CD4-positive, alpha-beta T cell (primary cell): ENCODE measurements at regions of chr13 and their contacts with region 1.

Region 1: DNA sequence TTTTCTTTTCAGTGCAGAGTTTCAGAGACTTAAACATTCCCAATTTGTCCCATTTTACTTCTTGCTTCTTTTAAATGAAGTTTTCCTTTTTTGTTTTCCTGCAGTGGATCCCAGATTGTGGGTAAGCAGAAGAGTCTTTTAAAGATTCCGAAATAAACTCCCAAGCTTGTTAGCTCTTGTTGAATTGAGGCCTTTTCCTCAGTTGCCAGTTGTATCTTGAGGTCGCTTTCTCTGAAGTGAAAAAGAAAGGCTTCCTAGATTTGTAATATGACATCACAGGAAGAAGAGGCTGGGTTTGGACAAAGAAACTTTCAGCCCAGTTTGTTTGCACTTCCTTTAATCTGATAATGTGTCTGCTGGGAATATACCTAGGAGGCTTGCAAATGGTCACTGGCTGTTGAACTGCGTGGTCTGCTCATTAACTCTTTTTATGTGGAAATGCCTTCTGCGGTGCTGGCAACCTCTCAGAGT is at the start of gene LPAR6:
- DNase-seq: peak in 4 of 14 experiments; percentile 23 to 87 (median 72)
- ATAC-seq: peak; percentile 52
- H3K4me3 ChIP-seq: peak within 1 kb of the TSS; percentile 88
- H3K4me3 Mint-ChIP-seq: peak within 1 kb of the TSS; percentile 95
- H3K27ac ChIP-seq: peak within 1 kb of the TSS; percentile 67 to 78
- H3K27ac Mint-ChIP-seq: peak within 1 kb of the TSS; percentile 95
- H3K4me1 ChIP-seq: peaks cover 12% of the 10 kb centered on the region
- H3K4me1 Mint-ChIP-seq: peaks cover 44% of the 10 kb centered on the region
- H3K27me3 ChIP-seq: no peaks in the 10 kb centered on the region
- H3K27me3 Mint-ChIP-seq: no peaks in the 10 kb centered on the region
- CTCF ChIP-seq: no peak
- total RNA-seq, gene LPAR6: 15.5 to 19.4 TPM

Region 2: GRCh38 chr13:48400850-48401291 is 12.0 kb before region 1 on chr13:
- CTCF ChIA-PET with region 1: interaction called, 3 read pairs
- POLR2A ChIA-PET with region 1: interaction called, 7 read pairs
- intact Hi-C with region 1: loop called in 1 of 2 experiments (anchors 1 kb)
- DNase-seq: peak in 3 of 14 experiments; percentile 41 to 60 (median 55)
- ATAC-seq: peak; percentile 68
- H3K4me3 ChIP-seq: peak overlapping the region; percentile 16
- H3K4me3 Mint-ChIP-seq: peak overlapping the region; percentile 13
- H3K27ac ChIP-seq: peak overlapping the region in 1 of 2 donors; percentile 26
- H3K27ac Mint-ChIP-seq: peak overlapping the region; percentile 37
- H3K4me1 ChIP-seq: peaks cover 25% of the 10 kb centered on the region
- H3K4me1 Mint-ChIP-seq: peaks cover 60% of the 10 kb centered on the region
- H3K27me3 ChIP-seq: no peaks in the 10 kb centered on the region
- H3K27me3 Mint-ChIP-seq: no peaks in the 10 kb centered on the region
- CTCF ChIP-seq: peak; percentile 48

Region 3: DNA sequence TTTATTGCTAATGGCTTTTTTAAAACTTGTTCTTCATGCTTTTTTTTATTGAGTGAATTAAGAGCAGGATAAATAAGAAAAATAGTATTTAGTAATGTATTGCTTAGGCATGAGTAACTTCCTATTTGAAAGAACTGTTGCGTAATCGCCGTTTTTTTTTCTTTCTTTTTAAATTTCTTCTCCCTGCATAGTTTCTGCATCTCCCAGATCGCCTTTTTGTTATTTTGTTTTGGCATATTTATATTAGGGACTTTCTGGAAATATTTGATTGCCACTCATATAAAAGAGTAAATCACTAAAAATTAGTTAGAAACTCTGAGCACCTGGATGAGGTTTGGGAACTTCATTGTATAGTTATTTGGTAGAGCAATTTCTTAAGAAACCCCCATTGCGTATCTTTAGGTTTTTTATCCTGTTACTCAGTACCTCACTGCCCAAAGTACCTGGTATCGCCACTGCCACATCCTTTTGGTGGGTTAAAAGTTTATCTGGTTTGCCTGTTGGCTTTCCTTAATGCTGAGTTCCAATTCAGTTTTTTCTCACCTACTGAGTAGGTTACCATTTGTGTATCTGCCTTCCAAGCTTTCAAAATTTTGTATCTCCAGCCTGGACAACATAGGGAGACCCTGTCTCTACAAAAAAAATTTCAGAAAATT is 36.2 kb after region 1 on chr13:
- CTCF ChIA-PET with region 1: no interaction called
- POLR2A ChIA-PET with region 1: interaction called, 7 read pairs
- intact Hi-C with region 1: loop called in 1 of 2 experiments (anchors 5 kb)
- DNase-seq: peak in 2 of 14 experiments; percentile 25 to 35
- ATAC-seq: no peak
- H3K4me3 ChIP-seq: peak overlapping the region; percentile 26
- H3K4me3 Mint-ChIP-seq: peak overlapping the region; percentile 74
- H3K27ac ChIP-seq: no peak overlapping the region
- H3K27ac Mint-ChIP-seq: peak overlapping the region; percentile 24
- H3K4me1 ChIP-seq: peaks cover 8% of the 10 kb centered on the region
- H3K4me1 Mint-ChIP-seq: peaks cover 14% of the 10 kb centered on the region
- H3K27me3 ChIP-seq: no peaks in the 10 kb centered on the region
- H3K27me3 Mint-ChIP-seq: no peaks in the 10 kb centered on the region
- CTCF ChIP-seq: no peak

Region 4: GRCh38 chr13:48492470-48493065 is 79.7 kb after region 1 on chr13:
- CTCF ChIA-PET with region 1: interaction called, 3 read pairs
- POLR2A ChIA-PET with region 1: interaction called, 18 read pairs
- intact Hi-C with region 1: loop called (anchors 5 kb)
- DNase-seq: peak; percentile 46 to 92 (median 62)
- ATAC-seq: peak; percentile 83
- H3K4me3 ChIP-seq: peak overlapping the region; percentile 58
- H3K4me3 Mint-ChIP-seq: no peak overlapping the region
- H3K27ac ChIP-seq: peak overlapping the region; percentile 57 to 79
- H3K27ac Mint-ChIP-seq: no peak overlapping the region
- H3K4me1 ChIP-seq: peaks cover 54% of the 10 kb centered on the region
- H3K4me1 Mint-ChIP-seq: peaks cover 25% of the 10 kb centered on the region
- H3K27me3 ChIP-seq: no peaks in the 10 kb centered on the region
- H3K27me3 Mint-ChIP-seq: no peaks in the 10 kb centered on the region
- CTCF ChIP-seq: no peak

Region 5: GRCh38 chr13:48562296-48563066 is 149.6 kb after region 1 on chr13:
- CTCF ChIA-PET with region 1: no interaction called
- POLR2A ChIA-PET with region 1: interaction called, 10 read pairs
- intact Hi-C with region 1: loop called in 1 of 2 experiments (anchors 5 kb)
- DNase-seq: peak; percentile 25 to 93 (median 52)
- ATAC-seq: peak; percentile 98
- H3K4me3 ChIP-seq: peak overlapping the region; percentile 8
- H3K4me3 Mint-ChIP-seq: peak overlapping the region; percentile 11
- H3K27ac ChIP-seq: no peak overlapping the region
- H3K27ac Mint-ChIP-seq: peak overlapping the region; percentile 6
- H3K4me1 ChIP-seq: peaks cover 19% of the 10 kb centered on the region
- H3K4me1 Mint-ChIP-seq: peaks cover 59% of the 10 kb centered on the region
- H3K27me3 ChIP-seq: no peaks in the 10 kb centered on the region
- H3K27me3 Mint-ChIP-seq: peaks cover 29% of the 10 kb centered on the region
- CTCF ChIP-seq: no peak

Region 6: GRCh38 chr13:48594096-48594815 is 181.3 kb after region 1 on chr13:
- CTCF ChIA-PET with region 1: no interaction called
- POLR2A ChIA-PET with region 1: no interaction called
- intact Hi-C with region 1: no loop called
- DNase-seq: no peak
- ATAC-seq: no peak
- H3K4me3 ChIP-seq: no peak overlapping the region
- H3K4me3 Mint-ChIP-seq: no peak overlapping the region
- H3K27ac ChIP-seq: no peak overlapping the region
- H3K27ac Mint-ChIP-seq: no peak overlapping the region
- H3K4me1 ChIP-seq: no peaks in the 10 kb centered on the region
- H3K4me1 Mint-ChIP-seq: no peaks in the 10 kb centered on the region
- H3K27me3 ChIP-seq: no peaks in the 10 kb centered on the region
- H3K27me3 Mint-ChIP-seq: no peaks in the 10 kb centered on the region
- CTCF ChIP-seq: no peak